Posterior vena cava (tissue), 2 donors: ENCODE measurements at regions of chr5 and their contacts with region 1.

Region 1: GRCh38 chr5:169149317-169149716 is 151.6 kb downstream of the SLIT3 start:
- DNase-seq: no peak

Region 2: GRCh38 chr5:168681556-168682183 is 467.6 kb before region 1 on chr5:
- intact Hi-C with region 1: loop called in 1 of 2 experiments (anchors 5 kb)
- DNase-seq: peak; percentile 87

Region 3: DNA sequence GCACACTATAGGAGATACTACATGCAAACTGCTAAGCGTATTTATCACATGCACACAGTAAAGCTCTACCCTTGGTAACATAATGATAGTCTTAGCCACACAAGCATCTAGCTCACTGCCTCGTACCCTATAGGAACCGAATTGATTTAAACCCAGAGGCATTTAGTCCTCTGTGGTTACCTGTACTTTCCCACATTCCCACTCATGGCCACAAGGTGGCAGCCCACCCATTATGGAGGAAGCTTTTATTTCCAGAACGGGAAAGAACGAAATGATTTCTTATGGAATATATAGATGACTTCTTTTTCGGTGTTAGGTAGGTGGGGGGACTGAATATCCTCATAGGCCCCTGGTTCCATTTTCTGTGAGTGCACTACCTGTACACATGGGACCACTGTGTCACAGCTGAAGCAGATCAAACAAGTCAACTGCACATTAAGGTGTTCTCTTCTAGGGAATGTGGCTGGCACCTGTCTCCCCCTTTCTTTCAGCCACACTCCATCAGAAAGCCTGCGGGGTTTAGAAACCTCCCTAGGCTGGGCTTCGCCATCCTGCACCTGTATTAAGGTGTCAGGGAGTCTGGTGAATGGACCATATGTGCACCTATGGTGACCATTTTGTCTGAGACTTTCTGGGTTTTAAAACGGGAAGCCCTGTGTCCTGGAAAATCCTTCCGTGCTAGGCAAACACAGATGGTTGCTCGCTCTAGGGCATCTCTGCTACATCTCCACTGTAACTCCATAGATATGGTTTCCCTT is 161.6 kb before region 1 on chr5:
- intact Hi-C with region 1: no loop called
- DNase-seq: peak; percentile 86

Region 4: GRCh38 chr5:169097374-169098326 is 51.7 kb before region 1 on chr5:
- intact Hi-C with region 1: loop called in 1 of 2 experiments (anchors 5 kb)
- DNase-seq: no peak

Region 5: DNA sequence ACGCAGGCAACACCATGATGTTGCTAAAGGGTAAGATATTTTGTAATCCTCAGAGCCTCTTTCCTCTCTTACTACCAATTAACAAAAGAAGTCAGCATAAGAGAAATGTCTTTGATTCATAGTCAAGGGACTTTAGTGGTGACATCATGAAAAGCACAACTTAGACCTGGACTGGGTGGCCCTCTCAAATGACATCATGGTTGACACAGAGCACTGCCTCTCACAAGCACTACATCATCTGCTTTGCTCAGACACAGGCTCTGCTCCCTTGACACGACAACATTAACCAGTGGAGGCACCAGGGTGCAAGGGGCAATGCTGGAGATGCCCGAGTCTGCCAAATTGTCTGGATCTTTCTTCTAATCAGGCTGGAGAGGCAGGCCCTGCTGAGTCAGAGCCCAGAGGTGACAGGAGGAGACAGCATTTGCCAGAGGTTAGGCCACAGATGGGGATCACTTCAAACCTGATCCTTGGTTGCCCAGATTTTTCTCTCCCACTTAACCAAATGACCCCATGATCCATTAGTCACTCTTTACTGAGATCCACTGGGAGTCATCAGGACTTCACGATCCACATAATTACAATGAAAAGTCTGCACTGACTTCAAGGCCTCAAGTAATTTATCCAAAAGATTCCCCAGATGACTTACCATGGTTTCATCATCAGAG is 22.8 kb before region 1 on chr5:
- intact Hi-C with region 1: no loop called
- DNase-seq: peak; percentile 83